HCT116 (cell line): ENCODE measurements at regions of chr16 and their contacts with region 1.

Region 1: GRCh38 chr16:4957720-4958509 is at the start of gene SEC14L5:
- DNase-seq: peak; percentile 98
- ATAC-seq: peak; percentile 87
- H3K4me3 ChIP-seq: peak within 1 kb of the TSS; percentile 44 to 59
- H3K27ac ChIP-seq: peak within 1 kb of the TSS; percentile 42
- H3K4me1 ChIP-seq: peaks cover 15 to 24% of the 10 kb centered on the region in 2 experiments; a peak in 3 of 4 replicates
- H3K27me3 ChIP-seq: peaks cover 9% of the 10 kb centered on the region; the same call in 1 of the 2 replicates
- CTCF ChIP-seq: no peak
- POLR2A ChIP-seq: no peak
- RAD21 ChIP-seq: no peak
- total RNA-seq, gene SEC14L5: 0.27 TPM

Region 2: DNA sequence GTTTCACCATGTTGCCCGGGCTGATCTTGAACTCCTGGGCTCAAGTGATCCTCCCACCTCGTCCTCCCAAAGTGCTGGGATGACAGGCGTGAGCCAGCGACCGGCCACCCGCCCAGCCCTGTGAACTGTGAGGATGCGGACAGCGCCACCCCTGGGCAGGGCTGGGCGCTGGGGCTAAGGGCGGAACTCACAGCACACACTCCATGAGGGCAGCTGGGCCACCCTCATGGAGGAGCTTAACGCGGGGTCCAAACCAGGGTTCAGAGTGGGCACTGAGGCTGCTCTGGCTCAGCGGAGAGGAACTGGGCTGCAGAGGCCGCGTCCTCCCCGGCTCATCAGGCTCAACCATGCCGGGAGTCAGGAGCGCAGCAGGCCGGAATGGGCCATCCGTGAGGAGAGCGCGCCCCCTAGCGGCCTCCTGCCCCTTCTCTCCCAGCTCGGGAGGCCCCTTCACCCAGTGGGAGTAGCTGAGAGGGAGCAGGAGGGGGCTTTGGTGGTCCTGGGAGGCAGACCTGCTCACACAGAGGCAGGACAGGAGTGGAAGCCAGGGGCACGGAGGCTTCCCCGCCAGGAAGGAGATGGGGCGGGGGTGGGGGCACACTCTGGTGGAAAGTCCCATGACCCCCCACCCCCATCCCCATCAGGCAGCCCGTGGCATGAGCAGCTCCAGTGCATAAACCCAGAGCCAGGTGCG is 555.3 kb before region 1 on chr16:
- CTCF ChIA-PET with region 1: no interaction called
- POLR2A ChIA-PET with region 1: no interaction called
- RAD21 ChIA-PET with region 1: no interaction called
- intact Hi-C with region 1: loop called (anchors 10 kb)
- DNase-seq: peak; percentile 35
- ATAC-seq: peak; percentile 91
- H3K4me3 ChIP-seq: peak overlapping the region in 1 of 2 experiments; percentile 34; a peak in 2 of 4 replicates
- H3K27ac ChIP-seq: no peak overlapping the region; the same call in 1 of the 2 replicates
- H3K4me1 ChIP-seq: peaks cover 10 to 11% of the 10 kb centered on the region in 2 experiments; a peak in 3 of 4 replicates
- H3K27me3 ChIP-seq: no peaks in the 10 kb centered on the region
- CTCF ChIP-seq: peak; percentile 90 to 96 (median 94)
- POLR2A ChIP-seq: no peak
- RAD21 ChIP-seq: peak; percentile 98

Region 3: DNA sequence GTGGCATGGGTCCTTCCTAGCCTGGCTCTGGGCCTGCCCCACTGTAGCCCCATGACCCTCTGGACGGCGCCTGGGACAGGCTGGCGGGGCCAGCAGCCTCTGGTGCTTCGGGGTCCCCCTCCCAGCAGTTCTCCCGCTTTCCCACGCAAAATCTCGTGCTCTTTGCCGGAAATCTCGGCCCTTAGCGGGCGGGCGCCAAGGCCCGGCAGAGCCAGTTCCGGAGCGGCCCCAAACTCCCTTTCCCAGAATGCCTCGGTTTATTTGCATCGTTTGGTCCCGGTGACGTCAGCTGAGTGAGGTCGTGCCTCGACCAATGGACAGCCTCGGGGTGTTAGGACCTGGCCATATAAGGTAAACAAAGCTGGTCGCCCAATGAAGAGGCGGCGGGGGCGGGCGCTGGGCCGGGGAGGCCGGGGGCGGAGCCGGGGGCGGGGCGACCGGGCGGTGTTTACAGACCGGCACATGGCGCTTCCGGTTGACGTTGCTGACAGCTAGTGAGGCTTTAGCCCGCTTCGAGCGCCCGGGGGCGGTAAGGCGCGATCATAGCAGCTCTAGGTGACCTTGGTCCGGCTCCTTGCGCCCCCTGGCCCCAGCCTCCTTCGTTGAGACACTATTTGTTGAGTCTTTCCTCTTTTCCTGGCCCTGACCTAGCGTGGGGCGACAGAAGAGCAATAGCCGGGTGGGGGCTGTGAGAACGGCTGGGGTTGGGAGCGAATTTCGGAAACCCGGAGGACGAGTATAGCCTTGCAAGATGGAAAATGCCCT is 341.7 kb before region 1 on chr16:
- CTCF ChIA-PET with region 1: interaction called, 3 read pairs
- POLR2A ChIA-PET with region 1: no interaction called
- RAD21 ChIA-PET with region 1: no interaction called
- intact Hi-C with region 1: loop called (anchors 5 kb)
- DNase-seq: peak; percentile 100
- ATAC-seq: peak; percentile 80
- H3K4me3 ChIP-seq: peak overlapping the region; percentile 79 to 80
- H3K27ac ChIP-seq: peak overlapping the region; percentile 92
- H3K4me1 ChIP-seq: peaks cover 25 to 42% of the 10 kb centered on the region in 2 experiments
- H3K27me3 ChIP-seq: no peaks in the 10 kb centered on the region
- CTCF ChIP-seq: peak in 2 of 3 experiments; percentile 26 to 28; a peak in 3 of 6 replicates
- POLR2A ChIP-seq: no peak
- RAD21 ChIP-seq: no peak

Region 4: GRCh38 chr16:4713663-4714501 is 244.0 kb before region 1 on chr16:
- CTCF ChIA-PET with region 1: interaction called, 3 read pairs
- POLR2A ChIA-PET with region 1: no interaction called
- RAD21 ChIA-PET with region 1: no interaction called
- intact Hi-C with region 1: loop called (anchors 2 kb)
- DNase-seq: no peak
- ATAC-seq: no peak
- H3K4me3 ChIP-seq: no peak overlapping the region
- H3K27ac ChIP-seq: no peak overlapping the region
- H3K4me1 ChIP-seq: no peaks in the 10 kb centered on the region
- H3K27me3 ChIP-seq: no peaks in the 10 kb centered on the region
- CTCF ChIP-seq: no peak
- POLR2A ChIP-seq: no peak
- RAD21 ChIP-seq: no peak

Region 5: GRCh38 chr16:4734063-4734729 is 223.7 kb before region 1 on chr16 and contains the starts of genes ANKS3 and DNAAF8:
- CTCF ChIA-PET with region 1: interaction called, 11 read pairs
- POLR2A ChIA-PET with region 1: no interaction called
- RAD21 ChIA-PET with region 1: no interaction called
- intact Hi-C with region 1: loop called (anchors 5 kb)
- DNase-seq: peak; percentile 92
- ATAC-seq: peak; percentile 94
- H3K4me3 ChIP-seq: peak within 1 kb of the TSS; percentile 97
- H3K27ac ChIP-seq: peak within 1 kb of the TSS; percentile 83
- H3K4me1 ChIP-seq: peaks cover 8 to 19% of the 10 kb centered on the region in 2 experiments
- H3K27me3 ChIP-seq: no peaks in the 10 kb centered on the region
- CTCF ChIP-seq: no peak
- POLR2A ChIP-seq: peak; percentile 57
- RAD21 ChIP-seq: no peak
- total RNA-seq, gene ANKS3: 25.5 TPM
- total RNA-seq, gene DNAAF8: 1.0 TPM

Region 6: GRCh38 chr16:4846891-4847773 is 110.8 kb before region 1 on chr16 and contains the starts of genes GLYR1 and UBN1:
- CTCF ChIA-PET with region 1: no interaction called
- POLR2A ChIA-PET with region 1: no interaction called
- RAD21 ChIA-PET with region 1: no interaction called
- intact Hi-C with region 1: loop called (anchors 5 kb)
- DNase-seq: peak; percentile 86
- ATAC-seq: peak; percentile 89
- H3K4me3 ChIP-seq: peak within 1 kb of the TSS; percentile 90 to 92
- H3K27ac ChIP-seq: peak within 1 kb of the TSS; percentile 91
- H3K4me1 ChIP-seq: peaks cover 13 to 35% of the 10 kb centered on the region in 2 experiments
- H3K27me3 ChIP-seq: no peaks in the 10 kb centered on the region
- CTCF ChIP-seq: no peak
- POLR2A ChIP-seq: peak; percentile 55
- RAD21 ChIP-seq: no peak
- total RNA-seq, gene GLYR1: 50.0 TPM
- total RNA-seq, gene UBN1: 31.9 TPM

Region 7: DNA sequence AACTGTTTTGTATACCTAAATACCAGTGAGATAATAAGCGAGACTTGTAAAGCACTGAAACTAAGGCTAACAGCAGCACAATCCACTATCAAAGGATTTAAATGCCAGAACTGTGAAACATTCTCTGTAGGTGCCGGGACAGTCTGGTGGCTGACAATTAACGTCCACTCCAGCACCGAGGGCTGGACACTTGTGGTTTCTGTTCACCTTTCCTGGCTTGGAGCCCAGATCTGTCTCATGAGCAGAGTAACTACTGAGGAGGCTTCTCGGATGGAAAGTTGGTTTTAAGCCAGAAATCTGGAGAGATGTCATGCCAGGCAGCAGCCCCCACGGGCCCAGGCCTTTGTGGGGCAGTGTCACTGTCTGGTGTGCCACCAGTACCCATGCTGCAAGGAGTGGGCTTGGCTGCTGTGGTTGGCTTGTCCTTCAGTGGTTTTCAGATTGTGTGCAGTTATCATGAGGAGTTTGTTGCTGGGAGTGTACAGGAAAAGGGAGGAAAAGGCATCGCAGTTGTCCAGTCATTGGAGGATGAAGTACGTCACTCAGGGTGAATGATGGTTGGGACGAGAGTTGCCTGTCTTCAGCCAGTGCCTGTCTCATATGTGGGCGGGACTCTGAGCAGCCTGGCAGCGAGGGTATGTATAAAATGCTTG is 75.2 kb before region 1 on chr16:
- CTCF ChIA-PET with region 1: no interaction called
- POLR2A ChIA-PET with region 1: no interaction called
- RAD21 ChIA-PET with region 1: interaction called in 1 of 2 experiments, 3 read pairs
- intact Hi-C with region 1: loop called (anchors 2 kb)
- DNase-seq: peak; percentile 92
- ATAC-seq: peak; percentile 85
- H3K4me3 ChIP-seq: no peak overlapping the region
- H3K27ac ChIP-seq: peak overlapping the region; percentile 45; the same call in 1 of the 2 replicates
- H3K4me1 ChIP-seq: peaks cover 21 to 27% of the 10 kb centered on the region in 2 experiments
- H3K27me3 ChIP-seq: no peaks in the 10 kb centered on the region
- CTCF ChIP-seq: no peak
- POLR2A ChIP-seq: no peak
- RAD21 ChIP-seq: peak; percentile 33; the same call in 1 of the 2 replicates